T-cell (primary cell): ENCODE measurements at regions of chr7 and their contacts with region 1.

Region 1: DNA sequence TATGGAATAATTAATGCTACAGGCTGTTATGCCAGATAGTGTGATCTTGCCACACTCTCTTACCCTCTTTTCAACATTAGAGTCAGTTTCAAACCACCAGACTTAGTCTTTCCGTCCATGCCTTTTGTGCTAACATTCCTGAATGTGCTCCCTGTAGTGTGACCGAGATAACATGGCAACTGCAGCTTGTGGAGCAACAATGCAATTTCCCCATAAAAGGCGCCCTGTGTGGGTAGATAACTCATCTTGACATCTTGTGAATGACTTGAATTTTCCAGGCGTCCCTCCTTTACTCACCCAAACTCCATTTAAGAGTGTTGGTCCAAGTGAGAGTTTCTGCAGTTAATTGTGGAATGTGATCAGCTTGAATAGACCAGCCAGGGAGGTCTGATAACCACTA is 99.6 kb downstream of the DNAH11 start:
- DNase-seq: no peak
- ATAC-seq: no peak
- H3K4me3 ChIP-seq: no peak overlapping the region
- H3K4me3 Mint-ChIP-seq: no peak overlapping the region
- H3K27ac ChIP-seq: no peak overlapping the region
- H3K27ac Mint-ChIP-seq: no peak overlapping the region
- H3K4me1 ChIP-seq: no peaks in the 10 kb centered on the region
- H3K4me1 Mint-ChIP-seq: peaks cover 0 to 7% (median 0%) of the 10 kb centered on the region in 3 donors
- H3K27me3 ChIP-seq: peaks cover 0 to 3% of the 10 kb centered on the region in 2 experiments
- H3K27me3 Mint-ChIP-seq: peaks cover 17 to 20% of the 10 kb centered on the region in 2 donors

Region 2: DNA sequence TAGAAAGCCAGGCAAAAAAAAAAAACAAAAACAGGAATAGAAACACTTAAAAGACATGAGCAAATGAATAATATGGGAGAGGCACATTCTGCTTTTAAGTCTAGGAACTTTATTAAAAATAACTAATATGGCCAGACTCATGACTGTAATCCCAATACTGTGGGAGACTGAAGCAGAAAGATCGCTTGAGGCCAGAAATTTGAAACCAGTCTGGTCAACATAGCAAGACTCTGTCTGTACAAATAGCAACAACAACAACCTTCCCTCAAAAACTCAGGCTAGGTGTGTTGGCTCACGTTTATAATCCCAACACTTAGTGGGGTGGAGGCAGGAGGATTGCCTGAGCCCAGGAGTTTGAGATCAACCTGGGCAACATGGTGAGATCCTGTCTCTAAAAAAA is 330.8 kb before region 1 on chr7:
- CTCF ChIA-PET with region 1: no interaction called
- POLR2A ChIA-PET with region 1: interaction called in 1 of 2 experiments, 10 read pairs
- DNase-seq: no peak
- ATAC-seq: no peak
- H3K4me3 ChIP-seq: no peak overlapping the region
- H3K4me3 Mint-ChIP-seq: no peak overlapping the region
- H3K27ac ChIP-seq: no peak overlapping the region
- H3K27ac Mint-ChIP-seq: no peak overlapping the region
- H3K4me1 ChIP-seq: no peaks in the 10 kb centered on the region
- H3K4me1 Mint-ChIP-seq: no peaks in the 10 kb centered on the region
- H3K27me3 ChIP-seq: no peaks in the 10 kb centered on the region
- H3K27me3 Mint-ChIP-seq: no peaks in the 10 kb centered on the region

Region 3: GRCh38 chr7:21587139-21587784 is 55.2 kb before region 1 on chr7:
- CTCF ChIA-PET with region 1: no interaction called
- POLR2A ChIA-PET with region 1: no interaction called
- DNase-seq: peak in 1 of 35 experiments; percentile 3
- ATAC-seq: peak in 1 of 4 experiments; percentile 24
- H3K4me3 ChIP-seq: no peak overlapping the region
- H3K4me3 Mint-ChIP-seq: peak overlapping the region in 1 of 3 donors; percentile 28
- H3K27ac ChIP-seq: no peak overlapping the region
- H3K27ac Mint-ChIP-seq: peak overlapping the region; percentile 1 to 17
- H3K4me1 ChIP-seq: peaks cover 0 to 9% of the 10 kb centered on the region in 2 experiments
- H3K4me1 Mint-ChIP-seq: peaks cover 17 to 19% (median 17%) of the 10 kb centered on the region in 3 donors
- H3K27me3 ChIP-seq: no peaks in the 10 kb centered on the region
- H3K27me3 Mint-ChIP-seq: peaks cover 3 to 5% of the 10 kb centered on the region in 2 donors